ENCODE measurements at regions of chr1 and their contacts with region 1.

Region 1: DNA sequence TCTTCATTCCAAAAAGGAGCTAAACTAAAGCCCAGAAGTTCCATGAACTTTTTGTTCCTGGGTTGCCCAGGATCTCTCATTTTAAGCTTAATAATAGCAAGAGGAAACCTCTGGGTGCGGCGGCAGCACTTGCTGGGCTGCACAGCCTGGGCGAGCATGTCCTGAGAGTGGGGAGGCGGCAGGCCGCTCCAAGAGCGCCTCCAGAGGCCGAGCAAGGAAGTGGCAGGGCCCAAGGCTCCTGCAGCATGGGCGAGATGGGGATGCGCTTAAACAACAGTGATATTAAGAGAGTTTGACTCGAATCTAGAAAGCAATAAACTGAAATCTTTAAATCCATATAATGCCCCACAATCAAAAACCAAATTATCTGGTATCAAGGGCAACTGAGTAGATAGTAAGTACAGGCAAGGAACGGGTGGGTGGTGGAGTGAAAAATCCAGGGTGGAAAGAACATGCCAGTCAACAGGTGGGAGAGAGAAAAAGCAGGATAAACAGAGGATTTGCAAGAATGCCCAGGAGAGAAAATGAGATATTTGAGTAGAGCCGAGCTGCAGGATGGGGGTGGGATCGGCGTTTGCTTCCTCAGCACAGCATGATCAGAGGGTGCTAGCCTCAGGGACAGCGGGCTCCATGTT is 14.1 kb upstream of the TNR start:
- DNase-seq: peak; percentile 42 to 48
- ATAC-seq: peak; percentile 89 to 99
- H3K4me3 ChIP-seq: no peak overlapping the region
- H3K27ac ChIP-seq: no peak overlapping the region
- H3K4me1 ChIP-seq: no peaks in the 10 kb centered on the region
- CTCF ChIP-seq: peak; percentile 55
- EP300 ChIP-seq: no peak
- POLR2A ChIP-seq: no peak
- RAD21 ChIP-seq: peak; percentile 37 to 55; a peak in 3 of 5 replicates

Region 2: DNA sequence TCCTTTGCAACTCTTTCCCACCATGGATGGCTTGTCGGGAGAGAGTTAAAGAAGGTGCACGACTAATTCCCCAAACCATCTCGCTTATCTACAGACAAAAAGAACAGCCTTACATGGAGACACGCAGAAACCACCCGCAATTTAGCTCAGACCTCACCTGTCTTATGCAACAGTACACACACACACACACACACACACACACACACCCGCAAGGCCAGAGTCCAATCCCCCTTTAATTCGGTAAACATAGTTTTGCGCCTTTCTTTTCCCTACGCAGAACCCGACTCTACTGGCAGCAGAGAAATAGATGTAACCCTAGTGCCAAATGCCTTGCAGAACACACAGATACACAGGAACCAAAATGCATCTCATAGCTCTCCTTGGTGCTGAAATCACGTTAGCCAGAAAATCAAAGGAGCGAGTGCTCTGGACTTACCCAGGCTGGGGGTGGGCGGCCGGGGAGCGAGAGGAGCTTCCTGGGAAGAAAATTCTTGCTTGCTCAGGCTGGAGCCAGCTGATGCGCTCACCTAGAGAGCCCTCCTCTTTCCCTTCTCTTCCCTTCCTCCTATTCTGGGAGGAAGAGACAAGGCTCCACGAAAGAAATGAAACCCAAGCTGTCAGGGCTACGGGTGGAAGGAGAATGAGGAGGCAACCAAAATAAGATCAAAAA is 14.6 kb before region 1 on chr1:
- CTCF ChIA-PET with region 1: interaction called, 17 read pairs
- POLR2A ChIA-PET with region 1: no interaction called
- DNase-seq: peak in 1 of 2 experiments; percentile 11
- ATAC-seq: peak; percentile 61 to 67
- H3K4me3 ChIP-seq: no peak overlapping the region
- H3K27ac ChIP-seq: no peak overlapping the region
- H3K4me1 ChIP-seq: no peaks in the 10 kb centered on the region
- CTCF ChIP-seq: no peak
- EP300 ChIP-seq: no peak
- POLR2A ChIP-seq: no peak
- RAD21 ChIP-seq: no peak

Region 3: GRCh38 chr1:175768610-175769009 is 11.1 kb after region 1 on chr1:
- CTCF ChIA-PET with region 1: interaction called, 12 read pairs
- POLR2A ChIA-PET with region 1: no interaction called
- DNase-seq: no peak
- ATAC-seq: no peak
- H3K4me3 ChIP-seq: no peak overlapping the region
- H3K27ac ChIP-seq: no peak overlapping the region
- H3K4me1 ChIP-seq: no peaks in the 10 kb centered on the region
- CTCF ChIP-seq: no peak
- EP300 ChIP-seq: no peak
- POLR2A ChIP-seq: no peak
- RAD21 ChIP-seq: no peak

Region 4: DNA sequence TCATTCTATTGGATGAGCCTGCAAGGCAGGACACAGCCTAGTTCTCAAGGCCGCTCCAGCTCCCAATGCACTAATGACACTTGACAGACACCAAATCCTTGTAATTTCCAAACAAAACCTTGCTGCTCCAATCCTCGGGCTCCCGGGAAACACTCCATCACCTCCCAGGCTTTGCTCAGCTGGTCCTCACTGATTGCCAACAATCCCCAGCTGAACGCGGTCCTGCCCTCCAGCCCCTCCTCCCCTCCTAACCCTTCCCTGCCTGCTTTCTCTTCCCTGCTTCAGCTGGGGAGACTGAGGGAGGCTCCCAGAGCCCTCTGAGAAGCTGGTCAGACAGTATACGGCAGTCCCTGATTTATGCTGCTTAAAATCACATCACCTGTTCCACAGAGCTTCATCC is 100.3 kb after region 1 on chr1:
- CTCF ChIA-PET with region 1: no interaction called
- POLR2A ChIA-PET with region 1: no interaction called
- DNase-seq: no peak
- ATAC-seq: no peak
- H3K4me3 ChIP-seq: no peak overlapping the region
- H3K27ac ChIP-seq: no peak overlapping the region
- H3K4me1 ChIP-seq: no peaks in the 10 kb centered on the region
- CTCF ChIP-seq: no peak
- EP300 ChIP-seq: no peak
- POLR2A ChIP-seq: no peak
- RAD21 ChIP-seq: no peak

Measured in A549 (cell line).